CD4-positive, alpha-beta T cell (primary cell): ENCODE measurements at regions of chr11 and their contacts with region 1.

Region 1: DNA sequence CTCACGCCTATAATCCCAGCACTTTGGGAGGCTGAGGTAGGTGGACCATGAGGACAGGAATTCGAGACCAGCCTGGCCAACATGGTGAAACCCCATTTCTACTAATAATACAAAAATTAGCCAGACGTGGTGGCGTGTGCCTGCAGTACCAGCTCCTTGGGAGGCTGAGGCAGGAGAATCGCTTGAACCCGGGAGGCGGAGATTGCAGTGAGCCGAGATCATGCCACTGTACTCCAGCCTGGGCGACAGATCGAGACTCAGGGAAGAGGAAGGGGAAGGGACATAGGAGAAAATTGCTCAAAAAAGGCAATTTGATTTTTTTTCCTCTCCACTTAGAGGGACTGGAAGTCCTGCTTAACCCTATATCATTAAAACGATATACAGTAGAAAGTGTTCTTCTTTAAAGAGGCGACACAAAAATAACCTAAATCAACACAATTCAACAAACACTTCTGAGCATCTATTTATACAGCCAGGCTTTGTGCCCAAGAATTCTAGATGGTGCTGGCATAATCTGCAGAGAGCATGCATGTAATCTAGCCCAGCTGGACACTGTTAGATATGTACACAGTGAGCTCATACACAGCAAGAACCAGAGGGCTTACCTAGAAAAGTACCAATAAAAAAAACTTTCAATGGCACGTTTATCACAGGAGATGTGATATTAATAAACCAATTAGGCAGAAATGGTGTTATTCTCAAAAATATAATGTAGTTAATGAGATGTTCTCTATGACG is 20.9 kb upstream of the DENND5A start:
- DNase-seq: no peak
- ATAC-seq: no peak
- H3K4me3 ChIP-seq: no peak overlapping the region
- H3K4me3 Mint-ChIP-seq: no peak overlapping the region
- H3K27ac ChIP-seq: no peak overlapping the region
- H3K27ac Mint-ChIP-seq: no peak overlapping the region
- H3K4me1 ChIP-seq: no peaks in the 10 kb centered on the region
- H3K4me1 Mint-ChIP-seq: peaks cover 10% of the 10 kb centered on the region
- H3K27me3 ChIP-seq: no peaks in the 10 kb centered on the region
- H3K27me3 Mint-ChIP-seq: no peaks in the 10 kb centered on the region
- CTCF ChIP-seq: no peak

Region 2: GRCh38 chr11:9170450-9170849 is 115.6 kb before region 1 on chr11:
- CTCF ChIA-PET with region 1: no interaction called
- POLR2A ChIA-PET with region 1: interaction called, 3 read pairs
- intact Hi-C with region 1: loop called in 1 of 2 experiments (anchors 2 kb)
- DNase-seq: no peak
- ATAC-seq: no peak
- H3K4me3 ChIP-seq: no peak overlapping the region
- H3K4me3 Mint-ChIP-seq: no peak overlapping the region
- H3K27ac ChIP-seq: no peak overlapping the region
- H3K27ac Mint-ChIP-seq: no peak overlapping the region
- H3K4me1 ChIP-seq: no peaks in the 10 kb centered on the region
- H3K4me1 Mint-ChIP-seq: peaks cover 13% of the 10 kb centered on the region
- H3K27me3 ChIP-seq: no peaks in the 10 kb centered on the region
- H3K27me3 Mint-ChIP-seq: no peaks in the 10 kb centered on the region
- CTCF ChIP-seq: no peak

Region 3: DNA sequence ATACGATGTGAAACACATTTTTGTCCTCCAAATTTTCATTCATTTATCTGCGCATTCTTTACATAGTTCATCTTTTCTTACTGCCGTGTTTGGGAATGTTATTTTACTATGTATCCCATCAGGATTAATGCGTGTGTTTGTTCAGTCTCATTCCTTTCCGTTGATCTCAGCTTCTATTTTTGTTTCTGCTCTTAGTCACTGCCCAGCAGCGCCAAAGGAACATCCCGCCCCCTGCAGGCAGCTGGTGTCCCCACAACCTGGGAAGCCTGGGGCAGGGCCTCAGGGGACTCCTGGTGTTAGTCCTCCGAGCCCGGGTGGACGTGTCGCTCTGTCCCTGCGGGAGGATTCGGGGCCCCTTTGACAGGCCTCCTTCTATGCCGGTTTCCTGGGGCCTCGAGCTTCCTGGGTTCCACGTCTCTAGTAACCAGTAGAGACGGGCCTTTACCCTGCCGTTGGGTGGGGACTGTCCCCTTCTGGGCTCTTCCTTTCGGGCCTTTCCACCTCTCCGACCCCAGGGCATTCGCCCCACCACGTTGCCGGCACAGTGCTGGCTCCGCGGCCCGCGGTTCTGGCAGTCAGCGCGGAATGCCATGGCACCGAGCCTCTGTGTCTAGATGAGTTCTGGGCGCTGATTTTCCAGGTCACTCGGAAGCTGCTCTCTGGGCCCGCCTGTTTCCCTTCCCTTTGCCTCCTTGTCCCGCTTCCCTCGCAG is 327.3 kb after region 1 on chr11:
- CTCF ChIA-PET with region 1: no interaction called
- POLR2A ChIA-PET with region 1: no interaction called
- intact Hi-C with region 1: no loop called
- DNase-seq: peak; percentile 74 to 90 (median 82)
- ATAC-seq: peak; percentile 46
- H3K4me3 ChIP-seq: peak overlapping the region; percentile 66
- H3K4me3 Mint-ChIP-seq: peak overlapping the region; percentile 95
- H3K27ac ChIP-seq: peak overlapping the region; percentile 71 to 86
- H3K27ac Mint-ChIP-seq: peak overlapping the region; percentile 89
- H3K4me1 ChIP-seq: peaks cover 19% of the 10 kb centered on the region
- H3K4me1 Mint-ChIP-seq: peaks cover 16% of the 10 kb centered on the region
- H3K27me3 ChIP-seq: no peaks in the 10 kb centered on the region
- H3K27me3 Mint-ChIP-seq: no peaks in the 10 kb centered on the region
- CTCF ChIP-seq: peak; percentile 84